ENCODE measurements at regions of chr4 and their contacts with region 1.

Region 1: GRCh38 chr4:156475322-156475721 is 496.3 kb downstream of the PDGFC start:
- DNase-seq: peak; percentile 36
- H3K27ac ChIP-seq: no peak overlapping the region
- CTCF ChIP-seq: peak; percentile 73

Region 2: DNA sequence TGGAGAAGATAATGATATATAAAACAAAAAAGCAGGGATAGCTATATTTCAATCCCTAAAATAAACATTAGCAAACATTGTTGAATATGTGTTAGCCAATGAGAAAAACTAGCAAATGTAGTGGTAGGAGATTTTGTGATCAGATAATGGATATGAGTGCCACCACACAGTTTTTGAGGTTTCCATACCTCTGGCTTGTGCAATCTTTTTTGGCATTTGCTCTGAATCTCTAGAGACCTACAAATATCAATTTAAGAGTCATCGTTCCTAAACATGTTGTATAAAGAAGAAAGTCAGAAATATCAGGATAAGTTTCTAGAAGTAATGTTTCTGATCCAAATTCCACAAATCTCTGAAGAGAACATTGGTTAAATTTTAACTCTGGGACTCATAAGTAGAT is 187.6 kb after region 1 on chr4:
- CTCF ChIA-PET with region 1: no interaction called
- POLR2A ChIA-PET with region 1: no interaction called
- DNase-seq: no peak
- H3K27ac ChIP-seq: no peak overlapping the region
- CTCF ChIP-seq: no peak

Region 3: DNA sequence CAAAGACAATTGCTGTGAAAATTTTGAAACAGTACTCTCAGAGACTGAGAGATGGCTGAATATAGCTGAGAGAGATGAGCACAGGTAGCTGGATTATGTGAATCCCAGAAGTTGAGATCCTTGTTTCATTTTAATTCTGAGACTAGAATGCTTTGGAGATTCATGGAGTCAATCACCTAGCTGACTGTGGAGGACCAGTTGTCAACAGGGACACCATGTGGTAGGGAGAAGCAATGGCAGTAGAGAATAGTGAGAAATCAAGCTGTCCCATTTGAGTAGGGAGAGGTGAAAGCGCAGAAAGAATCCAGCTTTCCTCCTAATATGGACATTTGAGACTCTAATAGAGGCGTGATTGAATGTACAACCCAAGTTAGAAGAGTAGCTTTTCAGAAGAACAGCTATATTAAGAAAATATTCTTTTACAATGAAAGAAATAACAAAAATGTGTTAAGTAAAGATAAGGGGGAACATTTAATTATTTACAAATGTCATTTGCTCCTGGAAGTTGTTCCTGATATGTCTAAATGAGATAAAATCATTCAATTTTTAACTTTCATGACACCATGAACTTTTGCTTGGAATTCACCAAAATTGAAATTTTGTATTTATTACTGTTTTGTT is 570.3 kb after region 1 on chr4:
- CTCF ChIA-PET with region 1: interaction called, 22 read pairs
- POLR2A ChIA-PET with region 1: no interaction called
- DNase-seq: peak; percentile 61
- H3K27ac ChIP-seq: no peak overlapping the region
- CTCF ChIP-seq: peak; percentile 80